BJ (cell line): ENCODE measurements at regions of chr17 and their contacts with region 1.

Region 1: DNA sequence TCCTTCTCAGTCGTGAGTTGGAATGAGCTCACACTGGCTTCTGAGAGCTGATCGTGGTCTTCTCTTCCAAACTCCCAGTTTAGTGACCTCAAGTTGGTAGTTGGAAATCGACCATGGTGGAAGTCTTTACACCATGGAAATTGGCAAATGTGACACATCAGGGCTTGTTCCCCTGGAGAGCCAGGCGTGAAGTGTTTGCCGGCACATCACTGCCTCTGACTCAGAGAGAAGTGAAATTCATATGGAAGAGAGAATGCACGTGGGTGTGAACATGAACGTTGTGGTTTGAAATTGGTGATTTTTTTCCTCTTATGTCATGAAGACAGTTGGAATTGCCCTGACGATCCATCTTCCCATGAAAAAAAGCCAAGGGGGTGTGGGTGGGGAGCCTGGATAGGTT is 47.4 kb downstream of the AXIN2 start:
- DNase-seq: no peak
- H3K4me3 ChIP-seq: no peak overlapping the region
- H3K27me3 ChIP-seq: peaks cover 2% of the 10 kb centered on the region
- CTCF ChIP-seq: no peak

Region 2: GRCh38 chr17:65537845-65538674 is 24.0 kb after region 1 on chr17:
- CTCF ChIA-PET with region 1: no interaction called
- POLR2A ChIA-PET with region 1: interaction called, 10 read pairs
- DNase-seq: no peak
- H3K4me3 ChIP-seq: no peak overlapping the region
- H3K27me3 ChIP-seq: no peaks in the 10 kb centered on the region
- CTCF ChIP-seq: no peak

Region 3: DNA sequence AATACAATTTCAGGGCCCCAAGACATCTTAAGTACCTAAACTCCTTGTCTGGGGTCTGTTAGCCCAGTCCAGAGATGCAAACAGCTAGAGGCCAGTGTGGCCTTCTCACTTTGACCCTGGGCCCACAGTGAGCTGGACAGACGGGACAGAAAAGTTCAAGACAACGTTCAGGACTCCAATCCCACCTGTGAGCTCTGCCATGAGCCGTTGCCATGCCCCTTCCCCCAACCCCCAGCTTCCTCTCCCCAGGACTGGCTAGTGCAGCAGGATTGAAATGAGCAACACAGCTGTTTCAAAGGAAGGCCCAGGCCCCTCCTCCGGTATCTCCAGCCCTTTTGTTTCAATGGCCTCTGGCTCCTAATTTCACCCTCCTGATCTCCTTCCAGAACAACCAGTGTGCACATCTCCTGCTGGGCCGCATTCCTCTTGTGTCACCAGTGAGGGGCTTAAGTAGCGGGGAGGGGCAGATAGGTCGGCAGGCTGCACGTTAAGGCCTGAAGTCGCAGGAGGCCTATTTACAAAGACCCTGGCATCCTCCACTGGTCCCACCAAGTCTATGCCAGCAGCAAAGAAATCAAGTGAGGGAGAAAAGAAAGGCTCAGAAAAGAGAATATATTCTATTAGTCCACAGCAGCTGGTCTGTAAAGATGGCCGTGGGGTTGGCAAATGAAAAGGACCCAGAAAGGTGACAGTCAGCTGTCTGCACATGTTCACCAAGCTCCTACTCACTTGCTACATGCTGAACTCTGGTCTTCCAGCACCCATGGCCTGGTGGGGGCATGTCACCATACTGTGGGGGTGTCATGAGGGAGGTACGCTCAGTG is 36.2 kb after region 1 on chr17:
- CTCF ChIA-PET with region 1: no interaction called
- POLR2A ChIA-PET with region 1: no interaction called
- DNase-seq: no peak
- H3K4me3 ChIP-seq: no peak overlapping the region
- H3K27me3 ChIP-seq: no peaks in the 10 kb centered on the region
- CTCF ChIP-seq: no peak

Region 4: DNA sequence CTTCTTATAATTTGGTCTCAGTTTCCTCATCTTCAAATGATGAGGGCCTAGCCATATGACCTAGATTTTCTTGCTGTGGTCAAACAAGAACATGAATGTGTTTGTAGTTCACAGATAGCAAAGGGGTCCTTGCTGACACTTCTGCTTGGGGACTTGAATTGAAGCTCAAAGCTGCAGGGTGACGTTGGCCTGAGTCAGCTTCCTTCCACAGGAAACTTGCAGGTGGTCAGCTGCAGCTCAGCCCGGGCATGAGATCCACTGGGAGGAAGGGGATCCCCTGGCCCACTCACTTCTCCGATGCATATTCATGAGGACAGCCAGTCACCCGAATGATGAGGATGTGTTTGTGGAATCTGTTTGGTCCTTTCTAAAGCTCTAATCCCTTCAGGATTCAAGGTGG is 90.0 kb after region 1 on chr17:
- CTCF ChIA-PET with region 1: no interaction called
- POLR2A ChIA-PET with region 1: no interaction called
- DNase-seq: no peak
- H3K4me3 ChIP-seq: no peak overlapping the region
- H3K27me3 ChIP-seq: no peaks in the 10 kb centered on the region
- CTCF ChIP-seq: no peak